ENCODE measurements at regions of chr12 and their contacts with region 1.

Region 1: DNA sequence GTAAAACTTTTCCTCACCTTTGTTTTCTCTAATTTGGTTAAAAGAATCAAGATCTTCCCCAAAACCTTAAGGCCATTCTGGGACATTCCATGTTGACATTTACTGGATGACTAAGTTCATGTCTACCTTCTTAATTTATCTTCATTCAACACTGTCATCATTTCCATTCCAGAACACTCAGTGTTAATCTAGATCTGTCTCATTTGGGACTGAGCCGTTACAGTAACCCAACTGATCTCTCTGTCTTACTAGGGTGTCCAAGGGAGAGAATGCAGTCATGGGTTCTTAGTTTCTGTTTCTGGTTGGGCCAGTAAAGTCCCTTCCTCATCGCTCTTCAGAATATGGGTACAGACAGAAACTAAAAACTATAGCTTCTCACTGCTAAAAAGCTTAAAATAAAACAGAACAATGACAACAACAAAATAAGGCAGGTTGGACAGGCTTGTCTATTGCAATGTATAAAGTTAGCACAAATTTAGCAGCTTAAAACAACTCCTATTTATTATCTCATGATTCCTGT is 144.8 kb downstream of the ASCL1 start:
- DNase-seq: no peak
- ATAC-seq: no peak
- H3K4me3 ChIP-seq: no peak overlapping the region
- H3K4me3 Mint-ChIP-seq: no peak overlapping the region
- H3K27ac ChIP-seq: no peak overlapping the region
- H3K27ac Mint-ChIP-seq: no peak overlapping the region
- H3K4me1 ChIP-seq: no peaks in the 10 kb centered on the region
- H3K4me1 Mint-ChIP-seq: no peaks in the 10 kb centered on the region
- H3K27me3 ChIP-seq: no peaks in the 10 kb centered on the region
- H3K27me3 Mint-ChIP-seq: no peaks in the 10 kb centered on the region
- CTCF ChIP-seq: no peak

Region 2: DNA sequence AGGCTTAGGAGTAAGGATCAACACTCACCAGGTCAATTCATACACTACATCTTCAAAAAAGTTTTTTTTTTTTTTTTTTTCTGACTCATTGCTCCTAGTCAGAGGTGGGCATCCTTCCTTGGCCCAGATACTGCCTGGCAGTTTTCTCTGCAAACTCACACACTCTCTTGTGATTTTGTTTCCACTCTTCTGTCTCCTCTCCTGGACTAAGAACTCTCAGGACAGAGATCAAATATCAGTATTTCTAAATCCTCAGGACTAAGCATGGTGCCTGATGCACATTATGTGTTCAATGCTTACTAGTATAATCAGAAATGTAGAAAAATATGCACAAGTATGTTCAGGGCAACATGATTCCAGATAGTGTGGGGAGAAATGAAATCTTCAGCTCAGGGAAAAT is 175.1 kb before region 1 on chr12:
- CTCF ChIA-PET with region 1: no interaction called
- POLR2A ChIA-PET with region 1: interaction called, 11 read pairs
- intact Hi-C with region 1: no loop called
- DNase-seq: no peak
- ATAC-seq: no peak
- H3K4me3 ChIP-seq: no peak overlapping the region
- H3K4me3 Mint-ChIP-seq: no peak overlapping the region
- H3K27ac ChIP-seq: no peak overlapping the region
- H3K27ac Mint-ChIP-seq: no peak overlapping the region
- H3K4me1 ChIP-seq: no peaks in the 10 kb centered on the region
- H3K4me1 Mint-ChIP-seq: no peaks in the 10 kb centered on the region
- H3K27me3 ChIP-seq: peaks cover 0 to 17% (median 3%) of the 10 kb centered on the region in 4 experiments
- H3K27me3 Mint-ChIP-seq: peaks cover 51% of the 10 kb centered on the region
- CTCF ChIP-seq: no peak

Region 3: GRCh38 chr12:103257768-103258167 is 155.5 kb after region 1 on chr12:
- CTCF ChIA-PET with region 1: no interaction called
- POLR2A ChIA-PET with region 1: no interaction called
- intact Hi-C with region 1: no loop called
- DNase-seq: no peak
- ATAC-seq: no peak
- H3K4me3 ChIP-seq: no peak overlapping the region
- H3K4me3 Mint-ChIP-seq: no peak overlapping the region
- H3K27ac ChIP-seq: no peak overlapping the region
- H3K27ac Mint-ChIP-seq: no peak overlapping the region
- H3K4me1 ChIP-seq: no peaks in the 10 kb centered on the region
- H3K4me1 Mint-ChIP-seq: no peaks in the 10 kb centered on the region
- H3K27me3 ChIP-seq: no peaks in the 10 kb centered on the region
- H3K27me3 Mint-ChIP-seq: no peaks in the 10 kb centered on the region
- CTCF ChIP-seq: no peak